ENCODE measurements at regions of chr21 and their contacts with region 1.

Region 1: DNA sequence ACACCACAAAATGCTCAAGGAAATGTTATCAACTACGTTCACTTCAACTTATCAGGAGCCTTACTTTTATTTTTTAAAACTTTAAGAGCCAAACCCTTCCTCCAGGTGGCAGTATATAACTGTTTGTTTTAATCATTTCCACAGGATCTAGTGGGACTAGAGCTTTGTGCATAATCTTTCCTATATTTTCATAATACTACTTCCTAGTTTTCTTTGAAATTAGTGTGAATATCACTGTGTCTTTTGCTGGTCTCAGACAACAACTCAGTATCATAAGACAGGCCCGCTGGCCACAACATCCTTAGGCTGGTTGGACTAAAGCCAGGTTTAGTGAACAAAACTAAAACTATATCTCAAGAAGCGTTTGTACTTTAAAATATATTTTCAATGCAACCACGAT is 145.5 kb downstream of the TIAM1 start:
- DNase-seq: no peak
- ATAC-seq: peak in 1 of 2 donors; percentile 48

Region 2: GRCh38 chr21:31012133-31013089 is 186.2 kb before region 1 on chr21:
- intact Hi-C with region 1: no loop called
- DNase-seq: no peak
- ATAC-seq: no peak

Region 3: DNA sequence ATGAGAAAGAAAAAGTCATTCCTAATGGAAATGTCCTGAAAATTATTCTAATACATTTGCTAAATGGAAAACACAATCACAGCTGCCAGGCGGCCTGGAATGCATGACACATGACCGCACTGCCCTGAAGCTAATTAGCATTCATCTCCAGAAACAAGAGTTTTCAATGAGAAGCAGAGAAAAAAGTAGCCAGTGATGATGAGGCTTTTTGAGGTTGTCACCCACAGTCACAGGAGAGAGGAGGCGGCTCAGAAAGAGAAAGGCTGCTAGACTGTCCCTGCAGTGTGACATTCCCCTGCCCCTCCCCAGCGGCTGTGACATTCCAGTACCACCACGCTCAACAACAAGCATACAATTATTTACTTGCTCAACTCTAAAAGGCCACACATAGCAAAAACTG is 37.4 kb before region 1 on chr21:
- intact Hi-C with region 1: no loop called
- DNase-seq: no peak
- ATAC-seq: peak in 1 of 2 donors; percentile 23

Region 4: GRCh38 chr21:31580866-31581276 is 382.3 kb after region 1 on chr21:
- intact Hi-C with region 1: loop called in 1 of 2 experiments (anchors 5 kb)
- DNase-seq: peak; percentile 71
- ATAC-seq: peak; percentile 72 to 77

Region 5: GRCh38 chr21:31604591-31605190 is 406.1 kb after region 1 on chr21:
- intact Hi-C with region 1: loop called (anchors 1 to 10 kb)
- DNase-seq: peak; percentile 76
- ATAC-seq: peak; percentile 69 to 78

Measured in left cardiac atrium (tissue), 4 donors.